Psoas muscle (tissue), 8 donors: ENCODE measurements at regions of chr9 and their contacts with region 1.

Region 1: GRCh38 chr9:38227061-38227540 is 158.1 kb upstream of the SHB start:
- DNase-seq: peak in 1 of 2 donors; percentile 53
- ATAC-seq: peak in 1 of 4 donors; percentile 30
- H3K4me3 ChIP-seq: no peak overlapping the region
- H3K27ac ChIP-seq: no peak overlapping the region
- H3K4me1 ChIP-seq: no peaks in the 10 kb centered on the region
- H3K27me3 ChIP-seq: peaks cover 0 to 9% (median 3%) of the 10 kb centered on the region in 3 donors
- CTCF ChIP-seq: no peak

Region 2: DNA sequence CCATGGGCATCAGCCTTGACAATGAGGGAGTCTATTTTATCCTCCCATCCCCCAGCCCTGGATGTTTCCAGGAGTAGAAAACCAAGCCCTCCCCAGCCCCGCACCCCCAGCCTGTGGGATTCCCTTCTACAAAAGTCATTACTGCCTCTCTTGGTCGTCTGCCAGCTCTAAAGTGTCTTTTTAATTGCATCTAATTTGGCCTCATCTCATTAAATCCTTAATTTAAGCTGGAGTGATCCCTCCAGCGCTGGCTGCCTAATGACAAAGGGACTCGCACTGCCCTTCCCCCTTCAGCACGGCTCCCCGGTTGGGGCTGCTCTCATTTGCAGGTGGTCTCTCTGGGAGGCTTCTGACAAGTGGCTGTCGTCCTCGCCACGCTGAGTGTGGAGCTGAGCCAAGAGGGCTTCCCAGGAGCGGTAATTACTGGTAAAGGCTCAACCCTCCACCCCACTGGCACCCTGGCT is 57.5 kb after region 1 on chr9:
- intact Hi-C with region 1: loop called in 1 of 2 experiments (anchors 10 kb)
- DNase-seq: no peak
- ATAC-seq: no peak
- H3K4me3 ChIP-seq: no peak overlapping the region
- H3K27ac ChIP-seq: no peak overlapping the region
- H3K4me1 ChIP-seq: no peaks in the 10 kb centered on the region
- H3K27me3 ChIP-seq: peaks cover 0 to 1% (median 0%) of the 10 kb centered on the region in 3 donors
- CTCF ChIP-seq: no peak

Region 3: DNA sequence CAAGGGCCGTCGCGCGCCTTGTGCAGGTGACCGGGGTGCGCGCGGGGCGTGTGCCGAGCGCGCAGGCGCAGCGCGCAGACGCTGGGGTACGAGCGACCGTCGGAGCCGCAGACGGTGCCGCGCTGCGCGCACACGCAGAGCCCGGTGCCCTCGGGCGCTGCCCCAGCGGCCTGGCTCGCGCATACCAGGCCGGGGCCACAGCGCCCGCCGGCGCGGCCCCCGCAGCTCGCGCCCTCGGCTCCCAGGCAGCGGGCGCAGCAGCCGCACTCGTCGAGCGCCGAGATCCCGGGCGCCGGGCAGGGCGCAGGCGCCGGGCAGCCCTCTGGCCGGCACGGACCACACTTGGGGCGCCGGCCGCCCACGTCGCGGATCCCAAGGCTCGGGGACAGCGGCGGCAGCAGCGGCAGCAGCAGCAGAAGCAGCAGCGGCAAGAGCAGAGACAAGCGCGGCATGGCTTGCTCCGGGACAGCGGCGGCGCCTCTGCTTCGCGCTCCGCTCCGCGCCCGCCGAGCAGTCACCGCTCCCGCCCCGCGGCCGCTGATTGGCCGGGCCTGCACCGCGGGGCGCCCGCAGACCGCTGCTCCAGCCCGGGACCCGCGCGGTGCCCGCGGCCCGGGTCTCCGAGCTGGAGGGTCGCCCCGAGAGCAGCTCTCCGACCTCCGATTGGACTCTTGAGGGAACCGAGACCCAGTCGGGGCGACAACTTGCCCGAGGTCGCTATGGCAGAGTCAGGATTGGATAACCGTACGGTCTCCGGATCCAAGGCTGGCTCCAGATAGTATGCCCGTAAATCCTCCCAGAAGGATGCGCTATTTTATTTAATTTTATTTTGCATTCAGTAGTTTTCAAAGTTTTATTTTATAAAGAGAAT is 197.1 kb after region 1 on chr9 and contains the start of gene IGFBPL1:
- intact Hi-C with region 1: no loop called
- DNase-seq: no peak
- ATAC-seq: peak; percentile 52 to 62 (median 58)
- H3K4me3 ChIP-seq: peak within 1 kb of the TSS; percentile 58
- H3K27ac ChIP-seq: no peak within 1 kb of the TSS
- H3K4me1 ChIP-seq: peaks cover 4% of the 10 kb centered on the region
- H3K27me3 ChIP-seq: peaks cover 7 to 50% (median 8%) of the 10 kb centered on the region in 3 donors
- CTCF ChIP-seq: no peak
- total RNA-seq, gene IGFBPL1: 0.42 to 0.51 TPM in 2 of 4 donors, not detected in the others